ENCODE measurements at regions of chr6 and their contacts with region 1.

Region 1: DNA sequence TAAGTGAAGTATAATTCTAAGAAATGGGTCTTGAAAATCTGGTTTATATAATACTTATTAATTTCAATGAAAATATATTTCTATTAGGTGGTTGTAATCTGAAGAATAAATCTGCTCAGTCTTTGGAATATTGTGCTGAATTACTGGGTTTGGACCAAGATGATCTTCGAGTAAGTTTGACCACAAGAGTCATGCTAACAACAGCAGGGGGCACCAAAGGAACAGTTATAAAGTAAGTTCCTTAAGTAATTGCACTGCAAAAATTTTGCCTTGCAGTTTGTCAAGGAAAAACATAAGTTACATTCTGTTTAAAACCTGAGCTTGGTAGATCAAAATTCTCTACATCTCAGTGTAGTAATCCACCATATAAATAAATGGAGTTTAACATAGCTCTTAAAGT is 106.0 kb downstream of the MYO6 start:
- DNase-seq: no peak
- ATAC-seq: no peak
- H3K4me3 Mint-ChIP-seq: no peak overlapping the region
- H3K27ac Mint-ChIP-seq: no peak overlapping the region
- H3K4me1 Mint-ChIP-seq: no peaks in the 10 kb centered on the region
- H3K27me3 Mint-ChIP-seq: no peaks in the 10 kb centered on the region
- CTCF ChIP-seq: no peak

Region 2: DNA sequence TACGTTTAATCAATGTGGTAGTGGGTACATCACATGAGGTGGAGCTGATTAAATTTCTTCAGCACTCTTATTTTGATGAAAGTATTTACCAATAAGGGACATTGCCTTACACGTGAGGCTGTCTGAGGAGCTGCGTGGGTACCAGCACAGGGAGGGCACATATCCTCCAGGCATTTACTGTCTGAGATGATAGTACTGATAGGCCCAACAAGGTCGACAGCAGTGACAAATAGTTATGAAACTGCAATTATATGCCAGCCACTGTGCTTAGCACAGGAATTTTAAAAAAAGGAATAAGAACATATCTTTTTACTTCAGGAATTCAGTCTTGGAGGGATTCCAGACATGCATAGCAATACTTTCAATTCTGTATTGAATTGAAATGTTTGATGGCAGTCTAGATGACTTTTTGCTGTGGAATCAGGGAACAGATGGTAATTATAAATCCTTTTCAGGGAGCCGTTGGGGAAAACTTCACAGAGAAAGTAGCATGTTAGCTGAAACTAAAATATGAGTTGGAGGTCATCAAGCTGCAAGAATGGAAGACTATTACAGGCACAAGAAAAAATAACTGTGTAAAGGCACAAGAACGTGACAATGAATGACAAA is 142.5 kb after region 1 on chr6:
- CTCF ChIA-PET with region 1: no interaction called
- POLR2A ChIA-PET with region 1: no interaction called
- intact Hi-C with region 1: no loop called
- DNase-seq: no peak
- ATAC-seq: no peak
- H3K4me3 Mint-ChIP-seq: no peak overlapping the region
- H3K27ac Mint-ChIP-seq: no peak overlapping the region
- H3K4me1 Mint-ChIP-seq: no peaks in the 10 kb centered on the region
- H3K27me3 Mint-ChIP-seq: no peaks in the 10 kb centered on the region
- CTCF ChIP-seq: no peak

Region 3: DNA sequence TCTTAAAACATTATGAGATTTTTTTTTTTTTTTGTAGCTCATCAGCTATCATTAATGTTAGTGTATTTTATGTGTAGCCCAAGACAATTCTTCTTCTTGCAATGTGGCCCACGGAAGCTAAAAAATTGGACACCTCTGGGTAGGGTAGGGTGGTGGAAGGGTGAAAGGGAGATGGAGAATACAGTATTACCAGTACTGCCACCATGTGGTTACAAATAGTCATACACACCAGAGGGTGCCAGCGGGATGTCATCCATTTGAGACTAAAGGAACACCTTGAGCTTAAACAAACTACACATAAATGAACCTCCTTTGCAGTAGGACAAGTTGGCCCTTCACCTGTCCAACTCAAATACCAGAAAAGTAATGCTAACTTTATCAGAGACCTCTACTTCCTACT is 1006.4 kb after region 1 on chr6:
- CTCF ChIA-PET with region 1: no interaction called
- POLR2A ChIA-PET with region 1: no interaction called
- intact Hi-C with region 1: loop called (anchors 5 kb)
- DNase-seq: no peak
- ATAC-seq: no peak
- H3K4me3 Mint-ChIP-seq: no peak overlapping the region
- H3K27ac Mint-ChIP-seq: no peak overlapping the region
- H3K4me1 Mint-ChIP-seq: no peaks in the 10 kb centered on the region
- H3K27me3 Mint-ChIP-seq: no peaks in the 10 kb centered on the region
- CTCF ChIP-seq: no peak

Measured in activated B cell treated with CpG ODN at 0.5 μM for 24 hours (primary cell).